AG04449 (cell line): ENCODE measurements at regions of chr21 and their contacts with region 1.

Region 1: DNA sequence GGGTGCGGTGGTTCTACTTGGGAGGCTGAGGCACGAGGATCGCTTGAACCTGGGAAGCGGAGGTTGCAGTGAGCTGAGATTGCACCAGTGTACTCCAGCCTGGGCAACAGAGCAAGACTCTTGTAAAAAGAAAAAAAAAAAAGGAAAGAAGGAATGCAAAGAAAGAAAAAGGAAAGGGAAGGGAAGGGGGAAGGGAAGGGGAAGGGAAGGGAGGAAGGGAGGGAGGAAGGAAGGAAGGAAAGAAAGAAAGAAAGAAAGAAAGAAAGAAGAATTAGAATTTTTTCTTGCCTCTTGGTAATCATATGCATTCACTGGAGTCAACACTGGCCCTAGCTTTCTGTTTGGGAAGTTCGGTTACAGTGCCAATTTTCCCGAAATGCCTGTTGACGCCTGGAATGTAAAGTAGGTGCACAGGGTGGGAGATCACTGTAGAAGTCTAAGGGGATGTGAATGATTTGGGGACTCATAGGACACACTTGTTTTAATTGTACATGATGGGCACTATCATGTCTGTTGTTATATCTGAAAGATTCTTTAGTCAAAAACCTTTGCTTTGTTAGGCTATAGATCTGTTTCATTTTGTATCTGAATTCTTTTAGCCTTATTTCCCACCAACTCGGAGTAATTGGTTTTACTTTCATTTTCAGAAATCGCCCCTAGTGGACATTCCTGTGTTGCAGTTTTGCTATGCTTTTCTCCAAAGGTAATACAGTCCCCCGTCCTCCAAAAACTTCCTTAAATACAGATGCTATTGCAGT is 59.8 kb upstream of the MORC3 start:
- DNase-seq: peak; percentile 16
- H3K4me3 ChIP-seq: peak overlapping the region; percentile 49
- CTCF ChIP-seq: peak; percentile 51

Region 2: GRCh38 chr21:36223451-36223850 is 36.8 kb before region 1 on chr21:
- CTCF ChIA-PET with region 1: interaction called, 10 read pairs
- POLR2A ChIA-PET with region 1: no interaction called
- DNase-seq: no peak
- H3K4me3 ChIP-seq: no peak overlapping the region
- CTCF ChIP-seq: no peak

Region 3: DNA sequence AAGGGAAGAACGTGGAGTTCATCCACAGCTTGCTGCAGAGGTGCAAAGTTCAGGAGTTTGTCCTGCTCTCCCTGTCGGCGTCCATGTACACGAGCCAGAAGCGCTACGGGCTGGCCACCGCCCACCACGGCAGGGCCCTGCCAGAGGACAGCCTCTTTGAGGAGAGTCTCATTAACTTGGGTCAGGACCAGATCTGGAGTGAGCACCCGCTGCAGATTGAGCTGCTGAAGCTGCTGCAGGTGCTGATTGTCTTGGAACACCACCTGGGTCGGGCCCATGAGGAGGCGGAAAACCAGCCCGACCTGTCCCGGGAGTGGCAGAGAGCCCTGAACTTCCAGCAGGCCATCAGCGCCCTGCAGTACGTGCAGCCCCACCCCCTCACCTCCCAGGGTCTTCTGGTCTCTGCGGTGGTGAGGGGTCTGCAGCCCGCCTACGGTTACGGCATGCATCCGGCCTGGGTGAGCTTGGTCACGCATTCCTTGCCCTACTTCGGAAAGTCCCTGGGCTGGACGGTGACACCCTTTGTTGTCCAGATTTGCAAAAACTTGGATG is 14.1 kb before region 1 on chr21:
- CTCF ChIA-PET with region 1: interaction called, 30 read pairs
- POLR2A ChIA-PET with region 1: no interaction called
- DNase-seq: no peak
- H3K4me3 ChIP-seq: no peak overlapping the region
- CTCF ChIP-seq: no peak